Activated CD4-positive, alpha-beta memory T cell treated with anti-CD3 and anti-CD28 coated beads for 36 hours (primary cell): ENCODE measurements at regions of chr22 and their contacts with region 1.

Region 1: DNA sequence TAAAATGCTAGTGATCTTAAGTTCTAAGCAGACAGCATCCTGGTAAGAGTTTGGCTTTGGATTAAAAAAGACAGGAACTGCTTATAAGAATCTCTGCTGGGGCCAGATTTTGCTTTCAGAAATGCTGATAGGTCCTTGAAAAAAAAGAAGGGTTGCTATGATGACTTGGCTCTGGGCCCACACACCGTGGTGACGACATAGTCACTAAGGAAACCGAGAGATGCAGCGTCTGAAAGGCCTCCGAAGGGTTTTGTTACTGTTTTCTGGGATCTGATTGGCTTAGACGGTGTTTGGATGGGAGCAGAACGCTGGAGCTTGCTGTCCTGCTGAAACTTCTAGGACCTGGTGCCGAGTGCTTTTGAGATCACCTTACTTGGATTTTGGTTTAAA is 8.4 kb downstream of the FAM118A start:
- DNase-seq: peak; percentile 95
- H3K4me3 Mint-ChIP-seq: peak overlapping the region; percentile 75
- H3K27ac Mint-ChIP-seq: peak overlapping the region; percentile 95
- H3K4me1 Mint-ChIP-seq: peaks cover 67% of the 10 kb centered on the region
- H3K27me3 Mint-ChIP-seq: no peaks in the 10 kb centered on the region

Region 2: GRCh38 chr22:45302751-45303150 is 15.4 kb before region 1 on chr22:
- CTCF ChIA-PET with region 1: no interaction called
- POLR2A ChIA-PET with region 1: interaction called, 3 read pairs
- intact Hi-C with region 1: loop called (anchors 2 kb)
- DNase-seq: no peak
- H3K4me3 Mint-ChIP-seq: no peak overlapping the region
- H3K27ac Mint-ChIP-seq: peak overlapping the region; percentile 42
- H3K4me1 Mint-ChIP-seq: peaks cover 6% of the 10 kb centered on the region
- H3K27me3 Mint-ChIP-seq: no peaks in the 10 kb centered on the region

Region 3: DNA sequence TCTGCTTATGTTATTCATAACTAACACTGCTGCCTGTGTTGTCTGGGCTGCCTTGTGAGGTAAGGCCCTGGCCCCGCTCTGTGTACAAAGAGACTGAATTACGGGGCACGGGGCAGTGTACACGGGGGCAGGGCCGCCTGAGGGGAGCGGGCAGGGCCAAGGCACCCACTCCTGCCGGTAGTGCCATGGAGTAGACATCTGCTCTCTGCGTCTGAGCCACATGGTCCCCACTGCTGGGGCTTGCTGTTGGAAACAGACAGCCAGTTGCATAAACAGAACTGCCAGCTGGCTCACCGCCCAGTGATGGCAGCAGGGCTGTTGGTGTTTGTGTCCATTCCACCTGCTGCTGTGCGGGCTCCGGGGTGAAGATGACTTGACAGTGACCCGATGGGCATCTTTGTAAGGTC is 11.4 kb after region 1 on chr22:
- CTCF ChIA-PET with region 1: no interaction called
- POLR2A ChIA-PET with region 1: no interaction called
- intact Hi-C with region 1: no loop called
- DNase-seq: no peak
- H3K4me3 Mint-ChIP-seq: no peak overlapping the region
- H3K27ac Mint-ChIP-seq: no peak overlapping the region
- H3K4me1 Mint-ChIP-seq: peaks cover 12% of the 10 kb centered on the region
- H3K27me3 Mint-ChIP-seq: no peaks in the 10 kb centered on the region

Region 4: DNA sequence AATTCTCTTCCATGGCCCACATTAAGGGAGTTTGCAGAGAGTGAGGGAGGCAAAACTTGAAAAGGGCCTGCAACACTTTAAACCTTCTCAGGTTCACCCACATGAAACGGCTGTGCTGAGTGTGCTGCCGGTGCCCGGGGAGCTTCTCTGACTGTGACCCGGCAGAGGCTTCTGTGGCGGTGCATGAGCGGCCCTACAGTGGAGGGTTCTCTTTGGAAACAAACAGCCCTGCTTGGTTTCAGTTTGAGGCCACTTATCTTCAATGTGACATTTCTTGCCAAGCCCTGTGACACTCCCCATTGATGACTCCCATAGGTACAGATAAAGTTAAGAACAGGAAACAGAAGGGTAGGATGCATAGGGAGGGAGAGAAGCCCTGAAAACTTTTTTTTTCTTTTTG is 23.3 kb after region 1 on chr22:
- CTCF ChIA-PET with region 1: no interaction called
- POLR2A ChIA-PET with region 1: no interaction called
- intact Hi-C with region 1: loop called (anchors 1 kb)
- DNase-seq: peak; percentile 76
- H3K4me3 Mint-ChIP-seq: no peak overlapping the region
- H3K27ac Mint-ChIP-seq: peak overlapping the region; percentile 54
- H3K4me1 Mint-ChIP-seq: peaks cover 15% of the 10 kb centered on the region
- H3K27me3 Mint-ChIP-seq: no peaks in the 10 kb centered on the region

Region 5: GRCh38 chr22:45397806-45398205 is 79.6 kb after region 1 on chr22:
- CTCF ChIA-PET with region 1: no interaction called
- POLR2A ChIA-PET with region 1: no interaction called
- intact Hi-C with region 1: no loop called
- DNase-seq: no peak
- H3K4me3 Mint-ChIP-seq: no peak overlapping the region
- H3K27ac Mint-ChIP-seq: no peak overlapping the region
- H3K4me1 Mint-ChIP-seq: no peaks in the 10 kb centered on the region
- H3K27me3 Mint-ChIP-seq: peaks cover 2% of the 10 kb centered on the region